Activated CD4-positive, alpha-beta T cell treated with anti-CD3 and anti-CD28 coated beads, Interleukin-2, amount 10 ng/mL, durations not matched to agents 24 days and 14 days (primary cell): ENCODE measurements at regions of chr11 and their contacts with region 1.

Region 1: DNA sequence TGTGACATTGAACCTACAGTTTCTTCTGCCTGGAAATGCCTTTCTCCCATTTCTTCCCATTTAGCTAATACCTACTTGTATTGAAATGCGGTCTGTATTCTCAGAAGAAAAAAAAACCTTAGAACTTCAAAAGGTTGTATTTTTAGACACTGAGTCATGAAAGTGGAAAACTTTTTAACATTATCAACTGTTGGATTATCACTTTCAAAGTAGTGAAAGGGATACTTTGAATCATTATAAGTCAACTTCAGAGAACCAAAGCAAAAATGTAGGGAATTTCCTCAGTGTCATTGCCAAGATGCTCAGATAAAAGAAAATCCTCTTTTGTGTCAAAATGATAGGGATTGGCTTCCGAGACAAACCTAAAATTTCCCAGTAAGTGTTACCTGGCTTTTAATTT is 6.6 kb downstream of the HOATZ start:
- DNase-seq: no peak
- H3K4me3 Mint-ChIP-seq: no peak overlapping the region
- H3K27ac Mint-ChIP-seq: no peak overlapping the region
- H3K4me1 Mint-ChIP-seq: peaks cover 20% of the 10 kb centered on the region
- H3K27me3 Mint-ChIP-seq: no peaks in the 10 kb centered on the region

Region 2: GRCh38 chr11:111538407-111539114 is 17.4 kb after region 1 on chr11:
- intact Hi-C with region 1: loop called (anchors 1 kb)
- DNase-seq: no peak
- H3K4me3 Mint-ChIP-seq: peak overlapping the region; percentile 24
- H3K27ac Mint-ChIP-seq: peak overlapping the region; percentile 80
- H3K4me1 Mint-ChIP-seq: peaks cover 20% of the 10 kb centered on the region
- H3K27me3 Mint-ChIP-seq: peaks cover 62% of the 10 kb centered on the region